Activated CD4-positive, alpha-beta memory T cell treated with anti-CD3 and anti-CD28 coated beads for 36 hours (primary cell): ENCODE measurements at regions of chr6 and their contacts with region 1.

Region 1: GRCh38 chr6:24991810-24992467 is 56.2 kb upstream of the RIPOR2 start:
- DNase-seq: peak; percentile 81
- H3K4me3 Mint-ChIP-seq: peak overlapping the region; percentile 11
- H3K27ac Mint-ChIP-seq: peak overlapping the region; percentile 76
- H3K4me1 Mint-ChIP-seq: peaks cover 68% of the 10 kb centered on the region
- H3K27me3 Mint-ChIP-seq: no peaks in the 10 kb centered on the region

Region 2: DNA sequence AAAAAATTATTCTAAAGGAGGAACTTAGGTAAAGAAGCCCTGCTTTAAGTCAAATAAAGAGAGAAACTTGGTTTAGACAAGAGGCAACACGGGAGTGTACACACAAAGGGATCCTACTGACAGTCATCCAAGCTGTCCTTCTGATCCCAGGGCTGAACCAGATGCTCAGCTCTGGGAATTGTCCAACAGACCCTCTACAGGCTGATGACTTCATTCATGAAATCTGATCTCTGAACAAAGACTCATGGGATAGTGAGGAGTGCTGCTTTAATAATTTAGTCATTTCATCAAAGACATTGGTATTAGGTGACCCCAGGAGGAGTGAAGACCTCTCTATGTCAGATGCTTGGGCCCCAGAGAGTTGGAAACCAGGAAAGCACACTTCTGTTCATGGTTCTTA is 127.6 kb before region 1 on chr6:
- CTCF ChIA-PET with region 1: interaction called, 191 read pairs
- POLR2A ChIA-PET with region 1: no interaction called
- intact Hi-C with region 1: no loop called
- DNase-seq: no peak
- H3K4me3 Mint-ChIP-seq: no peak overlapping the region
- H3K27ac Mint-ChIP-seq: peak overlapping the region; percentile 72
- H3K4me1 Mint-ChIP-seq: peaks cover 81% of the 10 kb centered on the region
- H3K27me3 Mint-ChIP-seq: no peaks in the 10 kb centered on the region

Region 3: DNA sequence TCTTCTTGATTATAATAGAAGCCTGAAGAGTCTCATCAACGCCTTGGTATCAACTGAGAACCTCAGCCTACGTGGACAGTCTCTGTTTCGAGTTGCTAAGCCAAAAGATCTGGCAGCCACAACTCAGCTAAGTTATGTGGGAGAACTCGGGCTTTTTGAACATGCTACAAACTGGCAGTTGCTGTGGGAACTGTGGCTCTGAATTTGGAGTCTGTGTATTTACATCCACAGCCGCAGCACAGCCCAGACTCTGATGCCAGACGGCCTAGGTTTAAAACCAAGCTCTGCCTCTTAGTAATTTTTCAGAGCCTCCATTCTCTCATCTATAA is 92.0 kb before region 1 on chr6:
- CTCF ChIA-PET with region 1: interaction called, 28 read pairs
- POLR2A ChIA-PET with region 1: interaction called, 4 read pairs
- intact Hi-C with region 1: no loop called
- DNase-seq: peak; percentile 70
- H3K4me3 Mint-ChIP-seq: peak overlapping the region; percentile 59
- H3K27ac Mint-ChIP-seq: peak overlapping the region; percentile 90
- H3K4me1 Mint-ChIP-seq: peaks cover 88% of the 10 kb centered on the region
- H3K27me3 Mint-ChIP-seq: no peaks in the 10 kb centered on the region

Region 4: GRCh38 chr6:24927985-24928745 is 63.8 kb before region 1 on chr6:
- CTCF ChIA-PET with region 1: interaction called, 195 read pairs
- POLR2A ChIA-PET with region 1: interaction called, 3 read pairs
- intact Hi-C with region 1: no loop called
- DNase-seq: no peak
- H3K4me3 Mint-ChIP-seq: peak overlapping the region; percentile 80
- H3K27ac Mint-ChIP-seq: peak overlapping the region; percentile 97
- H3K4me1 Mint-ChIP-seq: peaks cover 81% of the 10 kb centered on the region
- H3K27me3 Mint-ChIP-seq: peaks cover 2% of the 10 kb centered on the region

Region 5: GRCh38 chr6:24974182-24975171 is 17.5 kb before region 1 on chr6:
- CTCF ChIA-PET with region 1: interaction called, 77 read pairs
- POLR2A ChIA-PET with region 1: interaction called, 6 read pairs
- intact Hi-C with region 1: no loop called
- DNase-seq: peak; percentile 69
- H3K4me3 Mint-ChIP-seq: peak overlapping the region; percentile 48
- H3K27ac Mint-ChIP-seq: peak overlapping the region; percentile 90
- H3K4me1 Mint-ChIP-seq: peaks cover 64% of the 10 kb centered on the region
- H3K27me3 Mint-ChIP-seq: no peaks in the 10 kb centered on the region

Region 6: GRCh38 chr6:25017932-25018567 is 26.1 kb after region 1 on chr6:
- CTCF ChIA-PET with region 1: interaction called, 81 read pairs
- POLR2A ChIA-PET with region 1: interaction called, 3 read pairs
- intact Hi-C with region 1: loop called (anchors 2 kb)
- DNase-seq: peak; percentile 90
- H3K4me3 Mint-ChIP-seq: peak overlapping the region; percentile 42
- H3K27ac Mint-ChIP-seq: peak overlapping the region; percentile 86
- H3K4me1 Mint-ChIP-seq: peaks cover 69% of the 10 kb centered on the region
- H3K27me3 Mint-ChIP-seq: no peaks in the 10 kb centered on the region

Region 7: GRCh38 chr6:25147223-25147622 is 155.3 kb after region 1 on chr6:
- CTCF ChIA-PET with region 1: no interaction called
- POLR2A ChIA-PET with region 1: no interaction called
- intact Hi-C with region 1: no loop called
- DNase-seq: no peak
- H3K4me3 Mint-ChIP-seq: no peak overlapping the region
- H3K27ac Mint-ChIP-seq: no peak overlapping the region
- H3K4me1 Mint-ChIP-seq: peaks cover 19% of the 10 kb centered on the region
- H3K27me3 Mint-ChIP-seq: no peaks in the 10 kb centered on the region

Region 8: DNA sequence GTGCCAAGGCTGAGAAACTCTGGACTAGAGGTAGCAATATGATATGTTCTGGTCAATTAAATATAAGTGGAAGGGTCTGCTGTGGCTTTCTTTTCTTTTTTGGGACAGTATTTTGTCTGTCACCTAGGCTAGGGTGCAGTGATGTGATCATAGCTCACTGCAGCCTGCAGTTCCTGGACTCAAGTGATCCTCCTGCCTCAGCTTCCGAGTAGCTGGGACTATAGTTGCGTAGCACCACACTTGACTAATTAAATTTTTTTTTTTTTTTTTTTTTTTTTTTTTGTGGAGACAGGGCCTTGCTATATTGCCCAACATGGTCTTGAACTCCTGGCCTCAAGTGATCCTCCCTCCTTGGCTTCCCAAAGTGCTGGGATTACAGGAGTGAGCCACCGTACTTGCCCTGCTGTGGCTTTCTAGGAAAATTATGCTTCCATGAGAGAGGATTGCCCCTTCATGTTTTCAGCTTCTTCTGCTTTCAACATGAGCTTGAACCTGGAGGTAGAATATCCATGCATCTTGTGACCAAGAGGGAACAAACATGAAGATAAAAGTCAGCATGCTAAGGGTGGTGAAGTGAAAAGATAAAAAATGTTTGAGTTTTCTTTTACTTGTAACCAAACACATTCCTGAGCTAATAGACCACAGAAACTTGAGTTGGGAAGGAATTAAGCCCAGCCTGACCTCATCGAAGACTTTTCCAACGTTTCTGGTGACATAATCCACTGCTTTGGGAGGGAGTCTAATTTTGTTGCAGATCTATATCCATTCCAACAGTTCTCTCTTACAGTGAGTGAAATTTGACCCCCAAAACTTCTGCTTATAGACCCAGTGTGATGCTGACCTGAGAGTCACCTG is 362.4 kb after region 1 on chr6:
- CTCF ChIA-PET with region 1: no interaction called
- POLR2A ChIA-PET with region 1: no interaction called
- intact Hi-C with region 1: no loop called
- DNase-seq: no peak
- H3K4me3 Mint-ChIP-seq: no peak overlapping the region
- H3K27ac Mint-ChIP-seq: no peak overlapping the region
- H3K4me1 Mint-ChIP-seq: peaks cover 6% of the 10 kb centered on the region
- H3K27me3 Mint-ChIP-seq: no peaks in the 10 kb centered on the region